ENCODE measurements at regions of chr9 and their contacts with region 1.

Region 1: GRCh38 chr9:1939926-1940368 is 75.2 kb upstream of the SMARCA2 start:
- DNase-seq: peak; percentile 75
- H3K4me3 Mint-ChIP-seq: no peak overlapping the region
- H3K27ac Mint-ChIP-seq: no peak overlapping the region
- H3K4me1 Mint-ChIP-seq: peaks cover 5% of the 10 kb centered on the region
- H3K27me3 Mint-ChIP-seq: peaks cover 6% of the 10 kb centered on the region

Region 2: GRCh38 chr9:1709345-1709744 is 230.6 kb before region 1 on chr9:
- intact Hi-C with region 1: loop called (anchors 10 kb)
- DNase-seq: peak; percentile 56
- H3K4me3 Mint-ChIP-seq: no peak overlapping the region
- H3K27ac Mint-ChIP-seq: no peak overlapping the region
- H3K4me1 Mint-ChIP-seq: no peaks in the 10 kb centered on the region
- H3K27me3 Mint-ChIP-seq: peaks cover 26% of the 10 kb centered on the region

Region 3: GRCh38 chr9:1869843-1870242 is 70.1 kb before region 1 on chr9:
- intact Hi-C with region 1: loop called (anchors 5 kb)
- DNase-seq: peak; percentile 69
- H3K4me3 Mint-ChIP-seq: no peak overlapping the region
- H3K27ac Mint-ChIP-seq: no peak overlapping the region
- H3K4me1 Mint-ChIP-seq: no peaks in the 10 kb centered on the region
- H3K27me3 Mint-ChIP-seq: peaks cover 47% of the 10 kb centered on the region

Region 4: DNA sequence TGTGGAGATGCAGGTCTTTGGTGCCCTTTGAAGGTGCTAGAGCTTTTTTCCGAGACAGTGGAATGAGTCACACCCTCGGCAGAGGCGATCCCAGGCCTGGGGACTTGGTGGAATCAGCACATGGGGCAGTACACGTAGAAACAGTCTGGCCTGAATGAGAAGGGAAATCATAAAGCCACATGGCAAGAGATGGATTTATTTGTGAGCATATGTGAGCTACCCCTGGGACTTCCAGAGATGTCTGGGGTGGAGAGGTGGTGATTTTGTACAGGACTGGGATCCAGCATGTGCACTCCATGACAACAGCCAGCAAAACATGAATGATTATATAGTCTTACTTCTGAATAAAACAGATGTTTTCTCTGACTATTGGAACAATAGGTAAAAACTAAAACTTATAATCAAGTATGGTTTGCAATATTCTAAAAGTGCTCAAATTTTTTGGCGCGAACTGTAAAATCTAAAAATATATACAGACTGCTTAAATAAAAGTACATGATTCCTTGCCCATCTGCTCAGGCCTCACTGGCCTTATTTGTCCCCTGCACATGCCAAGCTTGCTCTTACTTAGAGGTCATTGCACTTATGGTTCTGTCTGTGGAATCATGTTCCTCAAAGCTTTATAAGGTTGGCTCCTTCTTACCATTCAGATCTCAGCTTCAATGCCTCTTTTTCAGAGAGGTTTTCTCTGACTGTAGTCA is 20.5 kb after region 1 on chr9:
- intact Hi-C with region 1: no loop called
- DNase-seq: no peak
- H3K4me3 Mint-ChIP-seq: no peak overlapping the region
- H3K27ac Mint-ChIP-seq: no peak overlapping the region
- H3K4me1 Mint-ChIP-seq: no peaks in the 10 kb centered on the region
- H3K27me3 Mint-ChIP-seq: peaks cover 19% of the 10 kb centered on the region

Region 5: GRCh38 chr9:2012347-2012746 is 72.4 kb after region 1 on chr9:
- intact Hi-C with region 1: no loop called
- DNase-seq: peak; percentile 78
- H3K4me3 Mint-ChIP-seq: no peak overlapping the region
- H3K27ac Mint-ChIP-seq: peak overlapping the region; percentile 49
- H3K4me1 Mint-ChIP-seq: peaks cover 24% of the 10 kb centered on the region
- H3K27me3 Mint-ChIP-seq: peaks cover 18% of the 10 kb centered on the region

Region 6: DNA sequence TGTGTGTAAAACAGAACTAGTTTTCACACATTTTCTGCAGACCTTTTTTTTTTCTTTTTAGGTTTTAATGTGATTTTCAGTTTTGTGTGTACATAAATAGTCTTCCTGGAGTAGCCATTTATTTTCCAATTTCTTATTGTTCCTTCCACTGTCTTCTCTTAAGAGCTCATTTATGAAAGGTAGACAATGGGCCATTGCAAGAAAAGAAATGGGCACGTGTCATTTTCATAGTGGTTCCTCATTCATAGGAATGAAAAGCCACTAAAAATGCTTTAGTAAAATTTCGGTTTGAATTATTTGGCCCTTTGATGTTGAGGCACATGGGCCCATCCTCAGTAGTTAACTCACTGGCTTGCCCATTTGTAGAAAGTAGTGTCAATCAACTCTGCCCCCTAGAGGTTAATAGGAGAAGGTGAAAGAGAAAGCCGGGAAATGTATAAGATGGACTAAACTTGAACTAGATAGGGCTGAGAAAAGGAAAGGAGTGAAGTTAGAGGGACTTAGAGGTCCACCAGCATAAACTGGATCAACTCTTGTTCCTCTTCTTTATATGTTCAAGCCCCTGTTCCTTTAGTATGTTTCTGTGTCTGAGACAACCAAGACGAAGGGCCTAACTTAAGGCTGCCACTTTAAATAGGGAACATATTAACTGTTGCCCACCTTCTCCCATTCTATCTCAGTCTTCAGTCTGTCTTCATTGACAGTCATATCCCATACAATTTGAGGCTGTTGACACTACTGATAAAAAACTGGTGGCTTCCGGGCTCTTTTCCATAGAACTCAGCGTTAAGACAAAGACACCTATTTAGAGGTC is 147.8 kb after region 1 on chr9:
- intact Hi-C with region 1: loop called (anchors 5 kb)
- DNase-seq: peak; percentile 70
- H3K4me3 Mint-ChIP-seq: no peak overlapping the region
- H3K27ac Mint-ChIP-seq: peak overlapping the region; percentile 5
- H3K4me1 Mint-ChIP-seq: peaks cover 13% of the 10 kb centered on the region
- H3K27me3 Mint-ChIP-seq: no peaks in the 10 kb centered on the region

Measured in activated CD4-positive, alpha-beta T cell treated with anti-CD3 and anti-CD28 coated beads, Interleukin-2, amount 10 ng/mL, durations not matched to agents 24 days and 14 days (primary cell).